ENCODE measurements at regions of chr5 and their contacts with region 1.

Region 1: GRCh38 chr5:138128334-138128733 is 10.9 kb downstream of the NME5 start:
- DNase-seq: no peak
- H3K4me3 ChIP-seq: no peak overlapping the region
- H3K27ac ChIP-seq: no peak overlapping the region
- H3K4me1 ChIP-seq: no peaks in the 10 kb centered on the region; the same call in 1 of the 2 replicates
- H3K27me3 ChIP-seq: no peaks in the 10 kb centered on the region
- CTCF ChIP-seq: no peak

Region 2: DNA sequence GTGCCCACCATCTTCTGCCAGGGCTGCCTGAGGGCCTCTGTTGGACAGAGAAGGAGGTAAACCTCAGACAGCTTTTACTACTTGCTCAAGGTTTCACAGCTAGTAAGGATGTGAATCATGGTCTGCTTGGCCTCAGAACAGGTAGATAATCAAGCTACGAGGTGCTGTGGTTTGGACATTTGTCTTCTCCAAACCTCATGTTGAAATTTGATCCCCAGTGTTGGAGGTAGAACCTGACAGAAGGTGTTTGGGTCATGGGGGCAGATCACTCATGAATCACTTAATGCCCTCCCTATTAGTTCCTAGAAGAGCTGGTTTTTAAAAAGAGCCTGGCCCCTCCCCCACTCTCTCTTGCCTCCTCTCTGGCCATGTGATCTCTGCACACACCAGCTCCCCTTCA is 1221.8 kb before region 1 on chr5:
- CTCF ChIA-PET with region 1: interaction called, 11 read pairs
- POLR2A ChIA-PET with region 1: no interaction called
- intact Hi-C with region 1: no loop called
- DNase-seq: peak; percentile 43 to 74
- H3K4me3 ChIP-seq: no peak overlapping the region
- H3K27ac ChIP-seq: peak overlapping the region; percentile 6; the same call in 1 of the 2 replicates
- H3K4me1 ChIP-seq: peaks cover 24% of the 10 kb centered on the region
- H3K27me3 ChIP-seq: no peaks in the 10 kb centered on the region
- CTCF ChIP-seq: no peak

Region 3: DNA sequence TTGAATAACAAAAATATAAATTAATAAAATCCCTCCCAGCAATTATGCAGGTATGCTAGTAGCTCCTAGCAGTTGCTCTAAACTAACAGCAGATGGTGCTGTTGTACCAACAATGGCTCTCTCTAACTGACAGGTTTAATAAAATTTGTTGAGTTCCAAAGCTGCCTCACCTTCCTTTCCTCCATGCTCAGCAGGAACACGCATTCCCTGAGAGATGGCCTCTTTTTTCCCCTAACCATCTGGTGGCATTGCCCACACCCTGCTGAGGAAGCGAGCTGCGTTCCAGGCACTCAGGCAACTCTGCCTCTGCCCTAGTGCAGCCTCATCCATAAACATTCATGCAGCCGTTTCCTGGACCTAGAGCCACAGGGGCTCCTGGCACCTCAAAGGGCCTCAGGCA is 498.7 kb before region 1 on chr5:
- CTCF ChIA-PET with region 1: no interaction called
- POLR2A ChIA-PET with region 1: no interaction called
- intact Hi-C with region 1: loop called (anchors 2 kb)
- DNase-seq: peak in 1 of 2 experiments; percentile 11
- H3K4me3 ChIP-seq: no peak overlapping the region
- H3K27ac ChIP-seq: no peak overlapping the region
- H3K4me1 ChIP-seq: peaks cover 4% of the 10 kb centered on the region; the same call in 1 of the 2 replicates
- H3K27me3 ChIP-seq: no peaks in the 10 kb centered on the region
- CTCF ChIP-seq: peak; percentile 94

Region 4: DNA sequence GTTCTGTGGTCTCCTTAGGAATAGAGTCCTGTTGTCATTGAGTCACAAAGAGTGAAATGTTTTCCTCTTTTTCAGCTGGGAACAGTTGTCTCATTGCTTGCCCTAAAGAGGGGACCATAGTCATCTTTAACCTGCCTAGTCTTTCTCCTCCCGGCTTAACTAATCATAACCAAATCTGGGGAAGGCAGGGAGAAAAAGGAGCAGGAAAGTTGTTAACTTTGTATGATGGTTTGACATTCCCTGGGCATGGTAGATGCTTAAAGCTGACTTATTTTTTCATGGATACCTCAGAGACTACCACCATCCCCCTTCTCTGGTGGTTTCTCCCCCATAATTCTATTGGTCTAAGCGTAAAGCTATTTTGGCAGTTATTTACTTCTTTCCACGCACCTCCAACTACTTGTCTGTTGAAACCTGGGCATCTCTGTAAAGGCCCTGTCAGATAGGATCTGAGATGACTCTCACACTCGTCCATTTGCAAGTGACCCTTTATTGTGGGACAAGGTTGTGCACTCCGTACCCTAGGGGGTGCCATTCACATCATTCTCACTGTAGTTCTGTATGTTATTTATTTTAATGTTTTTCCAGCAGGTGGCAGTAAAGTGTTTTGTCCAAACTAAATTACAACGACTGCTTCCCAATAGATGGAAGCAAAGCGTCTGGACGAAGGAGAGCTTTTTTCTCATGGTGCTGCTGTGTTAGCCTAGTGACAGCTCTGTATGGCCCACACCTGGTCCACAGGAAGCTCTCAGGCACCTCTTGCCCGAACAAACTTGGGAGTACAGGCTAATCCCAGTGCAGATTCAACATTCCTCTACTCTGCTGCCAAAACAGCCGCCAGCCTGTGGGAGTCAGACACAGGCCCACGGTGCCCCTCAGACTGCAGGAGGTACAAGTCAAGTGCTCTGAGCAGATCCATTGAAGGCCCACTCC is 92.5 kb before region 1 on chr5:
- CTCF ChIA-PET with region 1: interaction called, 13 read pairs
- POLR2A ChIA-PET with region 1: no interaction called
- intact Hi-C with region 1: loop called (anchors 1 kb)
- DNase-seq: peak; percentile 55 to 79
- H3K4me3 ChIP-seq: no peak overlapping the region
- H3K27ac ChIP-seq: no peak overlapping the region
- H3K4me1 ChIP-seq: peaks cover 20% of the 10 kb centered on the region
- H3K27me3 ChIP-seq: no peaks in the 10 kb centered on the region
- CTCF ChIP-seq: peak; percentile 87

Region 5: DNA sequence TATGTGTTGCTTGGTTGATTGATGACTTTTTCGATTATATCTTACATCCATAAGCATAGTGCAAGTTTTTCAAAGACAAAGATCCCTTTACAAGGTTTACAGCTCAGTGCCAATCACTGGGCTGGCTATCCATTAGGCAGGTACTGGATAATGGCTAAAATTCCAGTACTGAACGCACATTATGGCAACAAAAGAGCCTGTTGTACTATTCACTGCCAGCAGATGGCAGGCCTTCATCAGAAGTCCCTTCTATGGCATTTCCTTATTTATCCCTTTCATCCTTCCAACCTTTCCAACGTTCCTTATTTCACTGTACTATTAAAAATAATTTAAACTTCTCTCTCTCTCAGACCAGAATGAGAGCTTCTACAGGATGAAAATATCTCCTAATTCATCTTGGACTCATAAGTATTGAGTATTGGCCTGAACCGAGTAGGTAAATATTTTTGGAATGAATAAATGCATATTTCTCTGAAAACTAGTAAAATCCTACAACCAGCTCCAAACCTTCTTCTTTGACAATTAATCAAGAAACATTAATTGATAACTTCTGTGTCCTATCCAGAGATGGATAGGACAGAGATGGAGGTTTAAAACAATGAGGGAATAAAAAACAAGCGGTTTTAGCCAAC is 51.2 kb before region 1 on chr5:
- CTCF ChIA-PET with region 1: interaction called, 7 read pairs
- POLR2A ChIA-PET with region 1: no interaction called
- intact Hi-C with region 1: loop called (anchors 1 kb)
- DNase-seq: peak in 1 of 2 experiments; percentile 56
- H3K4me3 ChIP-seq: no peak overlapping the region
- H3K27ac ChIP-seq: no peak overlapping the region
- H3K4me1 ChIP-seq: no peaks in the 10 kb centered on the region
- H3K27me3 ChIP-seq: no peaks in the 10 kb centered on the region
- CTCF ChIP-seq: peak; percentile 92

Region 6: DNA sequence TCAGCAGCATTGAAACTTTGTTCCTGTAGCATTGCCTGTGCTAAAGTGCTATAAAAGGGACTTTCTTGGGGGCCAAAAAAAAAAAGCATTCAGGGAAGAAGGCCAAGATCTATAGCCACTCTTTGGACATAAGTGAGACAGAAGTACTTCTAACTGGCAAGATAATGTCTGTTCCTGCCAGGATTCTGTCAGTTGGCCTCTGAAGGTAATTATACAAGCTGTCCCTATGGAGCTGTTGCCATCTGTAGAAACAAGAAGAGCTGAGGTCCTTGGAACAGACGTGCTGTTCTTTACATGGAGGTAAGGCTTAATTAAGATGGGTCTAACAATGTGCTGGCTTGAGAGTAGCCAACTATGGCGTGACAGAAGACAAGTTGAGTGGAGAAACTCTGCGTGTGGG is 60.3 kb after region 1 on chr5:
- CTCF ChIA-PET with region 1: no interaction called
- POLR2A ChIA-PET with region 1: interaction called, 15 read pairs
- intact Hi-C with region 1: no loop called
- DNase-seq: no peak
- H3K4me3 ChIP-seq: no peak overlapping the region
- H3K27ac ChIP-seq: no peak overlapping the region
- H3K4me1 ChIP-seq: no peaks in the 10 kb centered on the region
- H3K27me3 ChIP-seq: no peaks in the 10 kb centered on the region
- CTCF ChIP-seq: no peak

Region 7: GRCh38 chr5:138274189-138274853 is 146.0 kb after region 1 on chr5 and contains the start of gene GFRA3:
- CTCF ChIA-PET with region 1: no interaction called
- POLR2A ChIA-PET with region 1: no interaction called
- intact Hi-C with region 1: no loop called
- DNase-seq: no peak
- H3K4me3 ChIP-seq: no peak within 1 kb of the TSS
- H3K27ac ChIP-seq: no peak within 1 kb of the TSS
- H3K4me1 ChIP-seq: no peaks in the 10 kb centered on the region
- H3K27me3 ChIP-seq: no peaks in the 10 kb centered on the region
- CTCF ChIP-seq: no peak
- total RNA-seq, gene GFRA3: 0.68 TPM in 1 of 2 replicates, not detected in the other

Measured in PC-9 (cell line).